A673 (cell line): ENCODE measurements at regions of chr11 and their contacts with region 1.

Region 1: GRCh38 chr11:27535103-27535502 is 28.5 kb upstream of the LIN7C start:
- DNase-seq: no peak
- H3K4me3 ChIP-seq: no peak overlapping the region
- H3K27ac ChIP-seq: no peak overlapping the region
- H3K4me1 ChIP-seq: no peaks in the 10 kb centered on the region
- H3K27me3 ChIP-seq: peaks cover 83% of the 10 kb centered on the region
- CTCF ChIP-seq: no peak

Region 2: GRCh38 chr11:27553186-27553585 is 18.1 kb after region 1 on chr11:
- CTCF ChIA-PET with region 1: no interaction called
- POLR2A ChIA-PET with region 1: no interaction called
- intact Hi-C with region 1: loop called (anchors 1 kb)
- DNase-seq: peak; percentile 76
- H3K4me3 ChIP-seq: no peak overlapping the region
- H3K27ac ChIP-seq: no peak overlapping the region
- H3K4me1 ChIP-seq: no peaks in the 10 kb centered on the region
- H3K27me3 ChIP-seq: no peaks in the 10 kb centered on the region
- CTCF ChIP-seq: no peak